Mammary epithelial cell (primary cell): ENCODE measurements at regions of chr11 and their contacts with region 1.

Region 1: GRCh38 chr11:34044664-34045485 is 6.7 kb upstream of the CAPRIN1 start:
- DNase-seq: peak; percentile 90
- H3K4me3 ChIP-seq: no peak overlapping the region
- H3K27ac ChIP-seq: peak overlapping the region; percentile 56
- H3K4me1 ChIP-seq: peaks cover 8% of the 10 kb centered on the region
- H3K27me3 ChIP-seq: no peaks in the 10 kb centered on the region
- CTCF ChIP-seq: no peak

Region 2: DNA sequence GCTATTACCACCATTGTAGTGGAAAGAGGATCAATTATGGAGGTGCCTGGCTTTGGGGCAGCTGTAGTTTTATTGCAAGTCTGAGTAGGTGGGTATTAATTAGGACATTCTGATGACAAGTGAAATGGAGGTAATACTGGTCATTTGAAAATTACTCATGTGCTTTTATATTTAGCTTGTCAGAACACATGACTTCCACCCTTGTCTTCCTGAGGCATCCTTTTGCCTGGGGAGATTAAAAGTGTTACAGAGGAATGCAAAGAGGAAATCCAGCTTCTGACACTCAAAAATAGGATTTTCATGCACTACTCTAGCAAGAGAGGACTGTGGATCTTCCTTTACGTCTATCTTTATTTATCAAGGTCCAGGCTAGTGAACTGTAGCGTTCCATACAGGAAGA is 38.0 kb before region 1 on chr11:
- CTCF ChIA-PET with region 1: no interaction called
- dilution Hi-C with region 1: loop called (anchors 5 kb)
- in situ Hi-C with region 1: no loop called
- intact Hi-C with region 1: no loop called
- DNase-seq: no peak
- H3K4me3 ChIP-seq: no peak overlapping the region
- H3K27ac ChIP-seq: no peak overlapping the region
- H3K4me1 ChIP-seq: no peaks in the 10 kb centered on the region
- H3K27me3 ChIP-seq: no peaks in the 10 kb centered on the region
- CTCF ChIP-seq: no peak

Region 3: DNA sequence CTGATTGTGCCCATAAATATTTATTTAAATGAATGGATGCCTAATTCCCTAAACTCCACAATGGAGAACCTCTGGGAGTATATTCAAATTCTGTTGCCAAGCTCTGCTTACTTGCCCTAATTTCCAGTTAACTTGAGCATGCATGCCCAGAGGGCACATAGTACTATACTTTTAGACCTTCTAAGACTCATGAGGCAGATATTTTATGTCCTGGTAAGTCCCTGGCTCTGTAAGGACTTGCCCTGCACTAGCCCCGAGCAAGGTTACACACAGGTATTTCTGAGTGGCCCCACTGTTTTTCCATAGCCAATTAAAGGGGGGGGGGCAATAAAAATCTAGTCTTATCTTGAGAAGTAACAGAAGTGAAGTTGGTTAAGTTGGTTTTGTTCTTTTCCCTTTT is 14.5 kb before region 1 on chr11:
- CTCF ChIA-PET with region 1: no interaction called
- dilution Hi-C with region 1: no loop called
- in situ Hi-C with region 1: no loop called
- intact Hi-C with region 1: loop called (anchors 2 kb)
- DNase-seq: peak; percentile 84
- H3K4me3 ChIP-seq: no peak overlapping the region
- H3K27ac ChIP-seq: no peak overlapping the region
- H3K4me1 ChIP-seq: peaks cover 8% of the 10 kb centered on the region
- H3K27me3 ChIP-seq: no peaks in the 10 kb centered on the region
- CTCF ChIP-seq: no peak

Region 4: DNA sequence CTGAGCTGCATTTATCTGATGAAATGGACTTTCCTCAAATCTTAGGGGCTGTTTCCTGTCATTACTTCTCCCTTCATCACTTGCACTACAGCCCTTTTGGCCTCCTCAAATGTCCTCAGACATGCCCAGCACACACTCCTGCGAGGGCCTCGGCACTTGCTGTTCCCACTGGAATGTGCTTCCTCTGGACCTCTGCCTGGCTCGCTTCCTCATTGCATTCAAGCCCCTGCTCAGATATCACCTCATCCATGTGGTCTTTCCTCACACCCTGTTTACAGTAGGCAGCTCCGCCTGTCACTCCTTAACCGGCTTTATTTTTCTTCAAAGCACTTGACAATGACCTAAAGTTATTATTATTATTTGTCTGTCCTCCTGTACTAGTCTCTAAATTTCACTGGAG is 69.6 kb after region 1 on chr11:
- CTCF ChIA-PET with region 1: no interaction called
- dilution Hi-C with region 1: no loop called
- in situ Hi-C with region 1: no loop called
- intact Hi-C with region 1: no loop called
- DNase-seq: no peak
- H3K4me3 ChIP-seq: no peak overlapping the region
- H3K27ac ChIP-seq: no peak overlapping the region
- H3K4me1 ChIP-seq: no peaks in the 10 kb centered on the region
- H3K27me3 ChIP-seq: no peaks in the 10 kb centered on the region
- CTCF ChIP-seq: no peak

Region 5: DNA sequence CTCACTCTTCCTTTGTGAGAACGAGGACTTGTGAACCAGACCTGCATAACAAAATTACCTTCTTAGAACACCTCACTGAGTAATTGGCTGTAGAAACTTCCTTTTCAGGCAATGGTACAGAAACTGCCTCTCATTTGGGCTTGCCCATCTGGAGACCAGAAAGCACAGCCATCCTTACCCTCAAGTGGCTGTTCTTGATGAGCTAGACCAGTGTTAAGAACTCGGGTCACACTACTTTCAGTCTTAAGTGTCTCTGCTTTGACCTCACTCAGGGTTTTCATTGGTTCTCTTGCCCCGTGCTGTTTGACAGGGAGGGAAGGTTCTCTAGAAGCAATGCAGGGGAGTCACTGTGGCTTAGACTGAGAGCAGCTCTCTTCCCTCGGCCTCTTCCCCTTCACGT is 89.9 kb after region 1 on chr11:
- CTCF ChIA-PET with region 1: no interaction called
- dilution Hi-C with region 1: no loop called
- in situ Hi-C with region 1: no loop called
- intact Hi-C with region 1: no loop called
- DNase-seq: no peak
- H3K4me3 ChIP-seq: no peak overlapping the region
- H3K27ac ChIP-seq: no peak overlapping the region
- H3K4me1 ChIP-seq: no peaks in the 10 kb centered on the region
- H3K27me3 ChIP-seq: no peaks in the 10 kb centered on the region
- CTCF ChIP-seq: no peak